ENCODE measurements at regions of chr9 and their contacts with region 1.

Region 1: DNA sequence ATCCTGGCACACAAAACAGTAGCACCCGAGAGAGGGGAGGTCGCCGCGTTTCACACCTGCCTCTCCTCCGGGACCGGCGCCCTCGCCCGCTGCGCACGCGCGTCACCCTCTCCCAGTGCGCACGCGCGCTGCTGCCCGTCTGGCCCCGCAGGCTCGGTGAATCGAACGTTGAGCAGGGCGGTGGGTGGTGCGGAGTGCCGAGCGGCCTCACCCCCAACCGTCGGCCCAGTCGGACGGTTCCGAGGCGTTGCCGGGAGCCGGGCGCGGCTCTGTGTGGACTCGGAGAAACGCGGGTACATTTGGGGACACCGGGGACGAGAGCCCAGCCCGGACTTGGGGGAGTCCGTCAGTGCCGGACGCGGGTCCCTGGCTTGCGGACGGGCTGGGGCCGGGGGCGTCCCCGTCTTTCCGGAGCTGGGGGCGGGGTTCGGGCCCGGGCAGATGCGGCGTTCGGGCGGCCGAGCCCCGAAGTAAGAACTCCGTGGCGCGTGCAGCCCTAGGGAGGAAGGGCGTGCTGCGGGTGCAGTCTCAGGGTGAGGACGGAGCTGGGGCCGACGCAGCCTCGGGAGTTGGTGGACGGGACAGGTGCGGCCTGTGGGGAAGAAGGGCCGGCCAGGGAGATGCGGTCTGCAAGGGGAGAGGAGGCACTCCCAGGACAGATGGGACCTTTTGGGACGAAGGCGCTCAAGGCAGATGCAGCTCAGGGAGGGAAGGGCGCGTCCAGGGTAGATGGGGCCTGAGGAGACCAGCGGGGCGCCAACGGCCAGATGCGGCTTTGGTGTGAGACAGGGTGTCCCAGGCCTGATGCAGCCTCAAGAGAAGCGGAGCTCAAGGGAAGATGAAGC is at the start of gene POMT1:
- DNase-seq: peak; percentile 59
- ATAC-seq: peak; percentile 90
- H3K4me3 ChIP-seq: peak within 1 kb of the TSS; percentile 90
- H3K27ac ChIP-seq: peak within 1 kb of the TSS; percentile 50; the same call in 1 of the 2 replicates
- H3K4me1 ChIP-seq: peaks cover 8% of the 10 kb centered on the region
- H3K27me3 ChIP-seq: no peaks in the 10 kb centered on the region
- CTCF ChIP-seq: no peak
- EP300 ChIP-seq: no peak
- POLR2A ChIP-seq: peak; percentile 84
- RAD21 ChIP-seq: no peak
- polyA plus RNA-seq, gene POMT1: 1.2 to 2.2 TPM

Region 2: DNA sequence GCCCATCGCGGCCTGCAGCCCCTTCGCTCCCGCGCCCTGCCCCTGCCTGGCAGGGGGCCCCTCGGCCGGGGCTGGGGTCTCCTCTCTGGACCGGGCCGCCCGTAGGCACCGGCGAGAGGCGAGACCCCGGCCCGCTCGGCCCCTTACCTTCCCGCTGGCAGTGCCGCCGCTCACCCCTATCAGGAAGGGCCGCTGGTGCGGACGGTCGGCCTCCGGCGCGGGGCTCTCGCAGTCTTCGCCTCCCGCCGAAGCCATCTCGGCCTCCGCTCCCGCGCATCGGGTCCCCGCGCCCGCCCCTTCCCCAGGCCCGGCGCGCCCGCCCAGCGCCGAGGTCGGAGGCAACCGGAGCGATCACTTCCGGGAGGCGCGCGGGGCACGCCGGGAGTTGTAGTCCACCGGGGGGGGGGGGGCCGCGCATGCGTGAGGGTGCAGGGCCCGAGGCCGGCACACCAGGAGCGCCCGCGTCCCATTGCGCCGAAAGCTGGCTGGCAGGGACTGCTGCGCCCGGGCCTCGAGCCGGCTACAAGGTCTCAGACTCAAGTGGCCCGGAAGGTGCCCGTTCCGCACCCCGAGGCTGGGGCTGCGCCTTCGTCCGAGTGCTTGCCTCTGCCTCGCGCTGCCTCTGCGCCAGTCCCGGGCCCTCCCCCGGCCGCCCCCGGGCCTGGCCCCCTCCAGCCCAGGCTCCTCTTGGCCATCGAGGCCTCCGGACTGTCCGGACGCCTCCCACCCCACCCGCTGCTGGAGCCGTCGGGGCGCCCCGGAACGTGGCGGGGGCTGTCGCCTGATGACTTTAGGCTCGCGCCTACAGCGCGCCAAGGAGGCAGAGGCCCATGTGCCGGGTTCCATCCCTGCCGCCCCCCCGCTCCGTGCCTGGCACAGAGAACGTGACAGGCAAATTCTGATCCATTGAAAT is 28.2 kb after region 1 on chr9 and contains the start of gene UCK1:
- CTCF ChIA-PET with region 1: no interaction called
- POLR2A ChIA-PET with region 1: no interaction called
- RAD21 ChIA-PET with region 1: no interaction called
- SMC1A ChIA-PET with region 1: no interaction called
- in situ Hi-C with region 1: no loop called
- intact Hi-C with region 1: loop called (anchors 2 kb)
- DNase-seq: peak; percentile 13
- ATAC-seq: peak; percentile 96
- H3K4me3 ChIP-seq: peak within 1 kb of the TSS; percentile 81
- H3K27ac ChIP-seq: peak within 1 kb of the TSS; percentile 65
- H3K4me1 ChIP-seq: peaks cover 4% of the 10 kb centered on the region
- H3K27me3 ChIP-seq: no peaks in the 10 kb centered on the region
- CTCF ChIP-seq: no peak
- EP300 ChIP-seq: no peak
- POLR2A ChIP-seq: peak; percentile 79
- RAD21 ChIP-seq: no peak
- polyA plus RNA-seq, gene UCK1: 0.31 to 0.88 TPM

Region 3: DNA sequence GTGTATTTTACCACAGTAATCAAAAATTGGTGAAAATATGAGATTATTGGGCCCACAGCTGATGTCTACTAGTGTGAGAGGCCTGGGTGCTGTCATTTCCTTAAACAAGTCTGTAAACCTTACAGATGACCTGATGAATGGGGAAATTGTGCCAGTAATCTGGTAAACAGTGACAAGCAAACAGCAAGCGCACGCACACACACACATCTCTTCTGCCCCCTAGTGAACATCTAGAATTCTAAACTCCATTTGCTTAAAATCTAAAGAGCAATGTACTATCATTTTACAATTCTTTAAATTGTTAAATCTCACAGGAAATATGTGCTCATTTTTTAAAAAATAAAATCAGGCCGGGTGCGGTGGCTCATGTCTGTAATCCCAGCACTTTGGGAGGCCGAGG is 244.4 kb after region 1 on chr9:
- CTCF ChIA-PET with region 1: interaction called, 4 read pairs
- POLR2A ChIA-PET with region 1: no interaction called
- RAD21 ChIA-PET with region 1: no interaction called
- SMC1A ChIA-PET with region 1: no interaction called
- in situ Hi-C with region 1: no loop called
- intact Hi-C with region 1: loop called (anchors 1 kb)
- DNase-seq: no peak
- ATAC-seq: peak; percentile 81
- H3K4me3 ChIP-seq: no peak overlapping the region
- H3K27ac ChIP-seq: no peak overlapping the region
- H3K4me1 ChIP-seq: peaks cover 15% of the 10 kb centered on the region
- H3K27me3 ChIP-seq: no peaks in the 10 kb centered on the region
- CTCF ChIP-seq: peak; percentile 66 to 77 (median 67)
- EP300 ChIP-seq: no peak
- POLR2A ChIP-seq: no peak
- RAD21 ChIP-seq: peak; percentile 85

Measured in GM12878 (cell line).